MCF 10A (cell line): ENCODE measurements at regions of chr11 and their contacts with region 1.

Region 1: DNA sequence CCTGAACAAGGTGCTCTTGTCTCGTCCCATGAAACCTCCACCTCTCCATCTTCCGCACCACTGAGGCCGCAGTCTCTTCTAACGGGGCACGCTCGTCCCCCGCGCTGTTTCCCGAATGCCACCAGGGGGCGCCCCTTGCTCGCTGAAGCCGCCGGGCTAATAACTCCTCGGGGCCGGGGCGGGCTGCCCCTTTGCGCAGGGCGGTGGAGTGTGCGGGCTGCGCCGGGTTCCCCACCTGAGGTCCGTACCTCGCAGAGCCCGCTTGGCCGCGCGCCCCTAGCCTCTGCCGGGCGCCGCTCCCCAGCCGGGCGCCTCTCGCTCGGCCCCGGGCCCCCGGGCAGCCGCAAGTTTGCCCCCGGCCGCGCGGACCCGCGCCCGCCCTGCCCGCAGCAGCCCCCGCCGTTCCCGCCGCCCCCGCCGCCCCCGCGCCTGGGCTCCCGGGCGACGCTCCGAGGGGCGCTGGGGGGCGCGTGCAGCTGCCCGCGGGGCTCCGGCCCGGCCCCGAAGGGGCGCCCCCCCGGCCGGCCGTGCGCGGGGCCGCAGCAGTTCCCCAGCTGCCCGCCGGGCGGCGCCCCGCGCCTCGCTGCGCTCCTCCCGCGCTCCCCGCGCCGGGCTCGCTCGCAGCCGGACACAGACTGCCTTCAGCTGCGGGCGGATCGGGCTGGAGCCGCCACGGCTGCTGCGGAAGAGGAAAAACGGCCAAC is at the start of gene GRIK4:
- DNase-seq: peak; percentile 79
- H3K4me3 Mint-ChIP-seq: peak within 1 kb of the TSS; percentile 29
- H3K27ac Mint-ChIP-seq: no peak within 1 kb of the TSS
- H3K4me1 Mint-ChIP-seq: peaks cover 6% of the 10 kb centered on the region
- H3K27me3 Mint-ChIP-seq: peaks cover 60% of the 10 kb centered on the region
- CTCF ChIP-seq: peak; percentile 92
- total RNA-seq, gene GRIK4: not detected in 2 replicates

Region 2: GRCh38 chr11:120467627-120468026 is 43.6 kb before region 1 on chr11:
- CTCF ChIA-PET with region 1: no interaction called
- POLR2A ChIA-PET with region 1: no interaction called
- intact Hi-C with region 1: no loop called
- DNase-seq: no peak
- H3K4me3 Mint-ChIP-seq: no peak overlapping the region
- H3K27ac Mint-ChIP-seq: no peak overlapping the region
- H3K4me1 Mint-ChIP-seq: no peaks in the 10 kb centered on the region
- H3K27me3 Mint-ChIP-seq: no peaks in the 10 kb centered on the region
- CTCF ChIP-seq: no peak

Region 3: DNA sequence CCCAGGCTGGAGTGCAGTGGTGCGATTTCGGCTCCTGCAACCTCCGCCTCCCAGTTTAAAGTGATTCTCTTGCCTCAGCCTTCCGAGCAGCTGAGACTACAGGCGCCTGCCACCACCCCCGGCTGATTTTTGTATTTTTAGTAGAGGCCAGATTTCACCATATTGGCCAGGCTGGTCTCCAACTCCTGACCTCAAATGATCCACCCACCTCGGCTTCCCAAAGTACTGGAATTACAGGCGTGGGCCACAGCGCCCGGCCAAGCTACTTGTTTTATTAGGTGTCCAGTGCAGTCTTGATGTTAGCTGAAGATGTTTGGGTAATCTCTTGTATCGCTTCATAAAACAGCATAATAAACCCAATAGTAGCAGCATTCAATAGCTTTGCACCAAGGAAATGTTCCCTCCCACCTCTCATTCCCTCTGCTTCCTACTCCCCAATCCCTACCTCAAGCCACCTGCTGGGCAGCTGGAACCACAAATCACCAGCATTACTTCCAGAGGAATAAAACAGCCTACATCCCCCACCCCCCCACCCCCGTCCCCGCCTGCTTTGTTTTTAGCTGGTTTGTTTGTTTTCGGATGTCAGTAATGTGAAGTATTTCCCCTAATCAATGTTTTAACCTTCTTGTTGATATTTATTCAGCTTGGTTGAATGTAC is 10.7 kb before region 1 on chr11:
- CTCF ChIA-PET with region 1: interaction called, 13 read pairs
- POLR2A ChIA-PET with region 1: no interaction called
- intact Hi-C with region 1: no loop called
- DNase-seq: no peak
- H3K4me3 Mint-ChIP-seq: no peak overlapping the region
- H3K27ac Mint-ChIP-seq: no peak overlapping the region
- H3K4me1 Mint-ChIP-seq: no peaks in the 10 kb centered on the region
- H3K27me3 Mint-ChIP-seq: peaks cover 18% of the 10 kb centered on the region
- CTCF ChIP-seq: no peak

Region 4: GRCh38 chr11:120688163-120688562 is 176.9 kb after region 1 on chr11:
- CTCF ChIA-PET with region 1: interaction called, 35 read pairs
- POLR2A ChIA-PET with region 1: no interaction called
- intact Hi-C with region 1: loop called (anchors 1 kb)
- DNase-seq: no peak
- H3K4me3 Mint-ChIP-seq: no peak overlapping the region
- H3K27ac Mint-ChIP-seq: no peak overlapping the region
- H3K4me1 Mint-ChIP-seq: no peaks in the 10 kb centered on the region
- H3K27me3 Mint-ChIP-seq: peaks cover 74% of the 10 kb centered on the region
- CTCF ChIP-seq: no peak

Region 5: GRCh38 chr11:120929664-120930154 is 418.4 kb after region 1 on chr11:
- CTCF ChIA-PET with region 1: interaction called, 3 read pairs
- POLR2A ChIA-PET with region 1: no interaction called
- intact Hi-C with region 1: loop called (anchors 1 kb)
- DNase-seq: peak; percentile 62
- H3K4me3 Mint-ChIP-seq: no peak overlapping the region
- H3K27ac Mint-ChIP-seq: no peak overlapping the region
- H3K4me1 Mint-ChIP-seq: no peaks in the 10 kb centered on the region
- H3K27me3 Mint-ChIP-seq: peaks cover 5% of the 10 kb centered on the region
- CTCF ChIP-seq: peak; percentile 52

Region 6: GRCh38 chr11:121112498-121113455 is 601.5 kb after region 1 on chr11:
- CTCF ChIA-PET with region 1: no interaction called
- POLR2A ChIA-PET with region 1: no interaction called
- intact Hi-C with region 1: loop called (anchors 1 kb)
- DNase-seq: peak; percentile 59
- H3K4me3 Mint-ChIP-seq: no peak overlapping the region
- H3K27ac Mint-ChIP-seq: no peak overlapping the region
- H3K4me1 Mint-ChIP-seq: no peaks in the 10 kb centered on the region
- H3K27me3 Mint-ChIP-seq: peaks cover 50% of the 10 kb centered on the region
- CTCF ChIP-seq: peak; percentile 48